ENCODE measurements at regions of chr13 and their contacts with region 1.

Region 1: DNA sequence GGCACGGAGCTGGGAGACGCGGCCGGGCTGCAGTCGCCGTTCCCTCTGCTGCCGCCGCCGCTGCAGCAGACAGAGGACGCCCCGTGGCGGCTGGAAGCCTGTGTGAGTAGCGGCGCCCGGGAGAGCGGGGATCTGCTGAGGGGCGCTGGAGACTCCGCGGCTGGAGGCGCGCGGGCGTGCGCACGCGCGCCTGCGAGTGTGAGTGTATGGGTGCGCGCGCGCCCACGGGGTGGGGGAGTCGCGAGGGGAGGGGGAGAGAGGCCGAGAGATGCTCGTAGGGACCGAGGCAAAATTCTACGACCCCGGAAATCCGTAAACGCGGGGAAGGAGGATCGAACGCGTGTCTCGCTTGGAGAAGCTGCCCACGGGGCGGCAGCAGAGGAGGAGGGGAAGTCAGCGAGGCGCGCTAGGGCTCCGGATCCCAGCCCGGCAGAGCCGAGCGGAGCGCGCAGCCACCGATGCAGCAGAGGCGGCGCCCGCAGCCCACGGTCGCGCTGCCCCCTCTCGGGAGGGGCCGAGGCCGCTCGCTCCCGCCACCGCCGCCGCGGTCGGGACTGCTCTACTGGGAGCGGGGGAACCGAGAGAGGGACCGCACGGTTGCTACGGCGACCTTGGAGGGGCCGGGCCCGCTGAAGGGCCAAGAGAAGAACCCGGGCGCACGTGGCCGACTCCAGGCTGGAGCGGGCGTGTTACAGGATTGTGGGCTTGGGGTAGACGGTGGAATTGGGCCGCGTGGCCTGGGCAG is at the start of gene ENOX1:
- DNase-seq: peak; percentile 74
- ATAC-seq: peak; percentile 79
- H3K4me3 ChIP-seq: peak within 1 kb of the TSS; percentile 52
- H3K27ac ChIP-seq: peak within 1 kb of the TSS; percentile 11
- H3K4me1 ChIP-seq: no peaks in the 10 kb centered on the region
- H3K27me3 ChIP-seq: no peaks in the 10 kb centered on the region; the same call in 1 of the 2 replicates
- CTCF ChIP-seq: peak; percentile 18; the same call in 1 of the 2 replicates
- POLR2A ChIP-seq: no peak
- RAD21 ChIP-seq: peak; percentile 36
- total RNA-seq, gene ENOX1: 1.3 and 1.9 TPM in 2 replicates

Region 2: DNA sequence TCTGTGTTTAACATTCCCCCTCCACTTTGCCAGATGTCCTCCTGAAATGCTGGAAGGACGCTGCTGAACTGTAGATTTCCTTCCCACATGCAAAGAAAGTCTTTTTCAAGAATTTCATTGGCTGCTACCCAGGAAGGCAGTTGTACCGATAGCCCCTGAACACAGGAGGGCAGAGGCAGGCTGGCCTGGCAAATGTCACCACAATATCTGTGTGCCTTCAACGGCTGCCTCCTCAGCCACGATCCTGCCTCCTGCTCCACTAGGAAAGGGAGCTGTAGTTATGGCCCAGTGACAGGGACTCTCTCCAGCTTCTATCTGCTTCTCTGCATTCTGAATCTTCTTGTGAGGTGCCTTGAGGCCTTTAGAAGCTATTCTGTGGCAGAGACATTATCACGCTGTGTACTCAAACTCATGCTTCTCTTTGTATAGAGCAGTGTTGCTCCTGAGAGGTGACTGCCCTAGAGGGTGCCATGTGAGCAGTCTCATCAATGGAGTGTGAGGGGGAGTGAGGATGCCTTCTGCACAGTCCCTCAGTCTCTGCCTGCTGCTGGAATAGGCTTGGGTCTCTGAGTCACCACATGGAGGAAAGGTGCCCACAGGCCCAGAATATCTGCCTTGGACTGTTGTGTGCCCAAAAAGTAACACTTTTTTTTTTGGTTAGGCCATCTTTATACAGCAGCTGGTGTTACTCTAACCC is 483.8 kb before region 1 on chr13:
- CTCF ChIA-PET with region 1: no interaction called
- POLR2A ChIA-PET with region 1: no interaction called
- dilution Hi-C with region 1: no loop called
- in situ Hi-C with region 1: loop called (anchors 10 kb)
- intact Hi-C with region 1: loop called (anchors 1 kb)
- DNase-seq: peak; percentile 70
- ATAC-seq: peak; percentile 68
- H3K4me3 ChIP-seq: no peak overlapping the region
- H3K27ac ChIP-seq: peak overlapping the region; percentile 2; the same call in 1 of the 2 replicates
- H3K4me1 ChIP-seq: peaks cover 13% of the 10 kb centered on the region
- H3K27me3 ChIP-seq: no peaks in the 10 kb centered on the region
- CTCF ChIP-seq: peak; percentile 59
- POLR2A ChIP-seq: no peak
- RAD21 ChIP-seq: peak; percentile 64

Region 3: DNA sequence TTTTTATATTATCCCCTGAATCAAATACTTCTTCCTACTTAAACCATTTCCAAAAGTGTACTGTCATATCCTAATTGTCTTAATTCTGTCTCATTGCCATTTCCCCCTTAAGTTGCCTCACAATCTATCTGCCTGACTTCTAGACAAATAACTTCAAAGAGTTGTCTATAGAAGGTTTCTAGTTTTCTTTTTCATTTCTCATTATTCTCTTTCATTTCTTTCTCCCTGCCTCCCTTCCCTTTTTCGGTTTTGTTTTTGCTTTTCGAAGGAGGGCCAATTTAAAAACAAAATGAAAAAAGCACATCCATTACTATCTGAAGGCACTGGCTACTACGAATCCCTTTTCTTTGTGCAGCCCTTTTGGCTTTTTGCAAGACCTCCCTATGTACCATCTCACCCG is 396.3 kb before region 1 on chr13:
- CTCF ChIA-PET with region 1: no interaction called
- POLR2A ChIA-PET with region 1: no interaction called
- dilution Hi-C with region 1: no loop called
- in situ Hi-C with region 1: no loop called
- intact Hi-C with region 1: loop called (anchors 10 kb)
- DNase-seq: no peak
- ATAC-seq: no peak
- H3K4me3 ChIP-seq: no peak overlapping the region
- H3K27ac ChIP-seq: peak overlapping the region; percentile 45; the same call in 1 of the 2 replicates
- H3K4me1 ChIP-seq: peaks cover 5% of the 10 kb centered on the region
- H3K27me3 ChIP-seq: no peaks in the 10 kb centered on the region
- CTCF ChIP-seq: no peak
- POLR2A ChIP-seq: no peak
- RAD21 ChIP-seq: no peak

Region 4: GRCh38 chr13:43567608-43568007 is 219.3 kb before region 1 on chr13:
- CTCF ChIA-PET with region 1: no interaction called
- POLR2A ChIA-PET with region 1: no interaction called
- dilution Hi-C with region 1: no loop called
- in situ Hi-C with region 1: no loop called
- intact Hi-C with region 1: loop called (anchors 10 kb)
- DNase-seq: peak; percentile 64
- ATAC-seq: peak; percentile 81
- H3K4me3 ChIP-seq: no peak overlapping the region
- H3K27ac ChIP-seq: no peak overlapping the region
- H3K4me1 ChIP-seq: peaks cover 7% of the 10 kb centered on the region
- H3K27me3 ChIP-seq: no peaks in the 10 kb centered on the region; the same call in 1 of the 2 replicates
- CTCF ChIP-seq: no peak
- POLR2A ChIP-seq: no peak
- RAD21 ChIP-seq: no peak

Region 5: GRCh38 chr13:44306401-44307192 is 519.7 kb after region 1 on chr13:
- CTCF ChIA-PET with region 1: no interaction called
- POLR2A ChIA-PET with region 1: no interaction called
- dilution Hi-C with region 1: no loop called
- in situ Hi-C with region 1: no loop called
- intact Hi-C with region 1: no loop called
- DNase-seq: peak; percentile 99
- ATAC-seq: peak; percentile 86
- H3K4me3 ChIP-seq: no peak overlapping the region
- H3K27ac ChIP-seq: peak overlapping the region; percentile 65
- H3K4me1 ChIP-seq: peaks cover 23% of the 10 kb centered on the region
- H3K27me3 ChIP-seq: no peaks in the 10 kb centered on the region
- CTCF ChIP-seq: no peak
- POLR2A ChIP-seq: no peak
- RAD21 ChIP-seq: no peak; the same call in 1 of the 2 replicates

Measured in IMR-90 (cell line).